HAP-1 (cell line): ENCODE measurements at regions of chr5 and their contacts with region 1.

Region 1: DNA sequence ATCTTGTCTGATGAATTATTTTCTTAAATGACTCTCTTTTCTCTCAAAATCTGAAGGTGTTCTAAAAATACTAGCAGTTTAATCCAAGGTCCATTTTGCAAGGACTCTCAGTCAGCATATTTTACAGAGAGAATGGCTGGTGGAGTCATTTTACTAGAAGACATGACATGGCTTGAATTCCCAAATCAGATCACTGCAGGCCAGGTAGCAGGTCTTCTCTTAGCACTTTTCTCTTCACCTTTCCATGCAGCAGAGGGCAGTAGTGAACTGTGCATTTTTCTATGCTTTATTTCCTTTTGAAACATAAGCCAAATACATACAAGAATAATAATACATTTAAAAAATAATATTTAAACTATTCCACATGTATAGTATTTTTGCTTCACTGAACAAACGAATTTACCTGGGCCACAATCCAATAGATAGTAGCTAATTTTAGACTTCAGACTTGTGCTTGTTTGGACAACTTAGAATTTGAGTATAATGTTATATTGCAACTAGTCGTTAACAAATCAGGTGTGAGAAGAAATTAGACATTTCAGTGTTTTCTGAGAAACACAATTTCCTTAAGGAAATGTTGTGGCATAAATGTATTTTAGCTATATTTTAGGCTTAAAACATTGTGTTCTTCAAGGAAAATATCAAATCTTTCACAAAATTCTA is 289.4 kb upstream of the DAB2 start:
- DNase-seq: peak; percentile 58 to 68
- H3K4me3 ChIP-seq: no peak overlapping the region
- H3K4me1 ChIP-seq: peaks cover 3% of the 10 kb centered on the region
- H3K27me3 ChIP-seq: no peaks in the 10 kb centered on the region

Region 2: GRCh38 chr5:40879163-40879942 is 1165.2 kb after region 1 on chr5:
- in situ Hi-C with region 1: loop called (anchors 25 kb)
- DNase-seq: peak in 1 of 2 experiments; percentile 52
- H3K4me3 ChIP-seq: no peak overlapping the region
- H3K4me1 ChIP-seq: no peaks in the 10 kb centered on the region
- H3K27me3 ChIP-seq: no peaks in the 10 kb centered on the region